Right ventricle myocardium inferior (tissue), 1 donor: ENCODE measurements at regions of chr7 and their contacts with region 1.

Region 1: DNA sequence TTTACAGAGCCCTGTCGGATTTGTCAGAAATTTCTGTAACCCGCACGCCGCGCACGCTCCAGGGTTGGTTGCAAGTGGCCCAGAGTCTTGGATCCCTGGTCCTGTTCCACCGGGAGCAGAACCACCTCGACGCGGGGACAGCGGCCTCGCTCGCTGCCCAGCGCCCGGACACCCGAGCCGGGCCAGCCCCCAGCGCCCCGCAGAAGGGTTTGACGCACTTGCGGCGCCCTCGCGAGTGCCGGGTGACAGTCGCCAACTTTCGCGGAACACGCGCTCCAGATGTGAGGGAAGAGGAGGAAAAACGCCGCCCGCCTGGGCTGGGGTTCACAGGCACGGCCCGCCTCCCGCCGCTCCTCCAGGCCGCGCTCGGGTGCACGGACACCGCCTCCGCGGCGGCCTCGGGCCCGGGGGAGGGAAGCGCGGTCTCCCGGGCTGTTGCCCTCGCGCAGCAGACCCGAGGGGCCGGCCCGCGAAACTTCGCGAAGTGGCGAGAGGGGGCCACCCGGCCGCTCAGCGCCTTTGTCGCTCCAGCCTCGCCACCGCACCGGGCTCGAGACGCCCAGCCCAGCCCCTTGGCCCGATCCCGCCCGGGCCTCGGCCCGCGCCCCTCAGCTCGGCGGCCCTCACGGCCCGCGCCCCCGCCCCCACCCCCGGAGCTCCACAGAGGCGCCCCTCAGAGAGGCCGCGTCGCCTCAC is 514 bp downstream of the RNF216 start:
- DNase-seq: peak; percentile 81
- ATAC-seq: peak; percentile 69

Region 2: DNA sequence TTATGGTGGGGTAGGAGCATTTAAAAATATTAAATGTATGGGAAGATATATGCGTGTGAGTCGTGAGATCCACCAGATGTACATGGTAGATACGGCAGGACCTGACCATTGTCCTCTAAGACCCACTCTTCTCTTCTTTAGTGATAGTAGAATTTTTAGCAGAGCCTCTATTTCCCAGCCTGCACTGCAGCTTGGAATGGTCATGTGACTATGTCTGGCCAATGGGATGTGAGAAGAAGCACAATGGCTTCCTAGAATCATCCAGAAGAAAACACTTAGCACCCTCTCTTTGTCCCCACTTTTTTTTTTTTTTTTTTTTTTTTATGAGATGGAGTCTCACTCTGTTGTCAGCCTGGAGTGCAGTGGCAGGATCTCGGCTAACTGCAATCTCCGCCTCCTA is 578.1 kb after region 1 on chr7:
- intact Hi-C with region 1: loop called (anchors 5 kb)
- DNase-seq: no peak
- ATAC-seq: no peak